G401 (cell line): ENCODE measurements at regions of chr7 and their contacts with region 1.

Region 1: GRCh38 chr7:76302347-76303201 is at the start of gene HSPB1:
- DNase-seq: peak; percentile 96
- total RNA-seq, gene HSPB1: 129 and 145 TPM in 2 replicates

Region 2: GRCh38 chr7:76201730-76202665 is 100.6 kb before region 1 on chr7 and contains the start of gene SRRM3:
- in situ Hi-C with region 1: loop called (anchors 10 kb)
- DNase-seq: peak; percentile 78
- total RNA-seq, gene SRRM3: 5.8 and 8.5 TPM in 2 replicates